ENCODE measurements at regions of chr5 and their contacts with region 1.

Region 1: DNA sequence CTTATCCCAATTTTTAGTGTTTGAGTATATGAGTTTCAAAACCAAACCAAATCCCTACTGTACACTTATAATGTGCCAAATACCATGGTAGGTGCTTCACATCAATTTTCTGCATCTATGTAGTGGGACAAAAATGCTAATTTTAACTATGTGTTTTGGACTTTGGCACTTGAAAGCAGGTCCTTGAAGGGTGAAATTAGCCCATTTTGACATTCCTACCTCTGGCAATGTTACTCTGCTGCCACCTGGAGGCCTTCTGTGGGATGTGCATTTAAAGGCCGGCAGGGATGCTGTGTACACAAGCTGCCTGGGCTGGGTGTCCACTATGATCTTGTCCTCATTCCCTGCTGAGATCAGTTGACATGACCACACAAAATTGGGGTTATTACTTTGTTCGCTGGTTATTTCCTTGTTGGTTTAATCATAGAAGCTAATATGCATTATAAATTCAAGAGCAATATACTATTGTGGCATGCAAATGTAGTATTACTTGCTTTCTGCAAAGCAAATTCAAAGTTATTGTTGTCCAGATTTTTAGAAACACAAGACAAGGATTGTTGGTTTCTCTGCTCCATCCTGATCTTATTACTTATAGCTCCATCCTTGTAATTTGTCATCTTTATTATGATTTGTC is 166.8 kb downstream of the ARHGEF28 start:
- DNase-seq: peak; percentile 62
- ATAC-seq: peak; percentile 73
- H3K4me3 ChIP-seq: no peak overlapping the region
- H3K4me3 Mint-ChIP-seq: no peak overlapping the region
- H3K27ac ChIP-seq: no peak overlapping the region
- H3K27ac Mint-ChIP-seq: no peak overlapping the region
- H3K4me1 ChIP-seq: no peaks in the 10 kb centered on the region
- H3K4me1 Mint-ChIP-seq: no peaks in the 10 kb centered on the region
- H3K27me3 ChIP-seq: peaks cover 0 to 3% (median 0%) of the 10 kb centered on the region in 4 experiments
- H3K27me3 Mint-ChIP-seq: peaks cover 14% of the 10 kb centered on the region
- CTCF ChIP-seq: peak; percentile 95

Region 2: DNA sequence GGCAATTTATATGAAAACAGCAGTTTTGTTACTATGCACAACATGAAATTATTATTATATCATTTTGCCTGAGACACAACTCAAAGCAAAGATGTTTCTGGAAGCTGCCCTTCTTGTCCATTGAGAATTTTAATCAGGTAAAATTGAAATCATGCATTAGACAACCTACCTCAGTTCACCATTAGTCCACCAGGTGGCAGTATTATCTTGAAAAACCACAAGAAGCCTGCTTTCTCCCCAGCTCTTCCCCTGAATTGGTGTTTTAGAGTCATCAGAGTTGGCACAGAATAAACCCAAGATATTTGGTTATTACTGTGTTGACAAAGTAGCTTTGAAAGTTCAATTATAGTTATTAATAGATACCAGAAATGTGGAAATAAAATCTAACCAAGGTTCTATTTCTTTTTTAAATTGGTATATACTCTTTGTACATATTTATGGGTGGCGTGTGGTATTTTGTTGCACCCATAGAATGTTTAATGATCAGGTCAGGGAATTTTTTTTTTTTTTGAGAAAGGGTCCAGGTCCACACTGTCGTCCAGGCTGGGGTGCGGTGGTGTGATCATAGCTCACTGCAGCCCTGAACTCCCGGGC is 201.6 kb before region 1 on chr5:
- CTCF ChIA-PET with region 1: interaction called, 101 read pairs
- POLR2A ChIA-PET with region 1: no interaction called
- intact Hi-C with region 1: loop called (anchors 1 kb)
- DNase-seq: peak; percentile 74
- ATAC-seq: peak; percentile 54
- H3K4me3 ChIP-seq: no peak overlapping the region
- H3K4me3 Mint-ChIP-seq: no peak overlapping the region
- H3K27ac ChIP-seq: no peak overlapping the region
- H3K27ac Mint-ChIP-seq: no peak overlapping the region
- H3K4me1 ChIP-seq: no peaks in the 10 kb centered on the region
- H3K4me1 Mint-ChIP-seq: no peaks in the 10 kb centered on the region
- H3K27me3 ChIP-seq: no peaks in the 10 kb centered on the region
- H3K27me3 Mint-ChIP-seq: no peaks in the 10 kb centered on the region
- CTCF ChIP-seq: peak; percentile 88

Region 3: DNA sequence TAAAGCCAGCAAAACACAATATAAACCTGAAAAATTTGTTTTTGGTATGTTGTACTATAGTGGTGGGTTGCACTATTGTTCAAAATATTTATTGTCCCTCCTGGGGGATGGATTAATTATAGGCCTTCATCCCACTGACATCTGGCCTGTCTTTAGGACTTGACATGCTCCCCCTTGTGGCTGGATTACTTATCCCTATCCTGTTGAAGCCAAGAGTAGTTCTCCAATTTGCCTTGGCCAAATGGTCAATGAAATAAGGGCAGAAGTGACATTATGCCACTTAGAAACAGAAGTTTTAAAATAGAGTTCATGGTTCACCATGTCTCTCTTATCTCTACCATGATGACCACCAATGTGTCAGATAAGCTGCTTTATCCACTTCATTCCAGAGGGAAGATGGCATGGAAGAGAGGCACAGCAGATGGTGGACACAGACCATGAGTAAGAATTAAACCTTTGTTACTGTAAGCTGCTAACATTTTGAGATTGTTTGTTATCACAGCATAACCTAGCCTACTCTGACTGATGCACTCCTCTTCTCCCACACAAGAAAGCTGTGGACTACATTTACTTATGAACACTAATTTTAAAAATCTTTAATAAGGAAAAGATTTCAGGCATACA is 196.0 kb before region 1 on chr5:
- CTCF ChIA-PET with region 1: interaction called, 101 read pairs
- POLR2A ChIA-PET with region 1: no interaction called
- intact Hi-C with region 1: no loop called
- DNase-seq: peak; percentile 14
- ATAC-seq: no peak
- H3K4me3 ChIP-seq: no peak overlapping the region
- H3K4me3 Mint-ChIP-seq: no peak overlapping the region
- H3K27ac ChIP-seq: no peak overlapping the region
- H3K27ac Mint-ChIP-seq: no peak overlapping the region
- H3K4me1 ChIP-seq: no peaks in the 10 kb centered on the region
- H3K4me1 Mint-ChIP-seq: no peaks in the 10 kb centered on the region
- H3K27me3 ChIP-seq: no peaks in the 10 kb centered on the region
- H3K27me3 Mint-ChIP-seq: peaks cover 15% of the 10 kb centered on the region
- CTCF ChIP-seq: peak; percentile 47

Region 4: GRCh38 chr5:73818357-73818756 is 25.6 kb after region 1 on chr5:
- CTCF ChIA-PET with region 1: no interaction called
- POLR2A ChIA-PET with region 1: no interaction called
- intact Hi-C with region 1: no loop called
- DNase-seq: no peak
- ATAC-seq: no peak
- H3K4me3 ChIP-seq: no peak overlapping the region
- H3K4me3 Mint-ChIP-seq: no peak overlapping the region
- H3K27ac ChIP-seq: no peak overlapping the region
- H3K27ac Mint-ChIP-seq: no peak overlapping the region
- H3K4me1 ChIP-seq: no peaks in the 10 kb centered on the region
- H3K4me1 Mint-ChIP-seq: no peaks in the 10 kb centered on the region
- H3K27me3 ChIP-seq: no peaks in the 10 kb centered on the region
- H3K27me3 Mint-ChIP-seq: peaks cover 9% of the 10 kb centered on the region
- CTCF ChIP-seq: no peak

Region 5: DNA sequence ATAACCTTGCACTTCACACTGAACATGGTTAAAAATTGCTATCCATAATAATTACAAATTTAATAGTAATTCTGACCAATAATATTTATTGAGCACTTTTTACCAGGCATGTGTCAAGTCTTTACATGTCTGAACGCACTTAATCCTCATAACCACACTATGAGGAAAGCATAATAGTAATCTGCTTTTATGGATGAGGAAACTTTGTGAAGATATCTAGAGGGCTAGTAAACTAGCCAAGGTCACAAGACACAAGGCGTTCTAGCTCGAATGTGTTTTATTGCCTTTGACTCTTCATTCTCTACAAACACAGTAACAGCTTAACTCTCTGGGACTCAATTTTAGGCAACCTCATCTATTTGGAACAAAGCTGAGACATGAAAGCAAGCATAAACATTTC is 38.3 kb after region 1 on chr5:
- CTCF ChIA-PET with region 1: no interaction called
- POLR2A ChIA-PET with region 1: no interaction called
- intact Hi-C with region 1: no loop called
- DNase-seq: no peak
- ATAC-seq: no peak
- H3K4me3 ChIP-seq: no peak overlapping the region
- H3K4me3 Mint-ChIP-seq: no peak overlapping the region
- H3K27ac ChIP-seq: no peak overlapping the region
- H3K27ac Mint-ChIP-seq: no peak overlapping the region
- H3K4me1 ChIP-seq: no peaks in the 10 kb centered on the region
- H3K4me1 Mint-ChIP-seq: no peaks in the 10 kb centered on the region
- H3K27me3 ChIP-seq: no peaks in the 10 kb centered on the region
- H3K27me3 Mint-ChIP-seq: peaks cover 15% of the 10 kb centered on the region
- CTCF ChIP-seq: no peak

Measured in B cell (primary cell).